Heart left ventricle (tissue), 16 donors: ENCODE measurements at regions of chr6 and their contacts with region 1.

Region 1: GRCh38 chr6:151025076-151025475 is 159.6 kb downstream of the MTHFD1L start:
- DNase-seq: no peak
- ATAC-seq: peak in 3 of 4 donors; percentile 43 to 63 (median 54)
- H3K4me3 ChIP-seq: no peak overlapping the region
- H3K27ac ChIP-seq: peak overlapping the region in 1 of 12 donors; percentile 69
- H3K4me1 ChIP-seq: peaks cover 0 to 17% (median 5%) of the 10 kb centered on the region in 12 donors
- H3K27me3 ChIP-seq: no peaks in the 10 kb centered on the region
- CTCF ChIP-seq: no peak
- POLR2A ChIP-seq: no peak

Region 2: GRCh38 chr6:150711584-150712504 is 313.2 kb before region 1 on chr6:
- intact Hi-C with region 1: no loop called
- DNase-seq: peak; percentile 47 to 64 (median 49)
- ATAC-seq: peak in 3 of 4 donors; percentile 38 to 75 (median 45)
- H3K4me3 ChIP-seq: no peak overlapping the region
- H3K27ac ChIP-seq: peak overlapping the region in 2 of 12 donors; percentile 14 to 40
- H3K4me1 ChIP-seq: peaks cover 0 to 44% (median 15%) of the 10 kb centered on the region in 12 donors
- H3K27me3 ChIP-seq: no peaks in the 10 kb centered on the region
- CTCF ChIP-seq: no peak
- POLR2A ChIP-seq: no peak

Region 3: DNA sequence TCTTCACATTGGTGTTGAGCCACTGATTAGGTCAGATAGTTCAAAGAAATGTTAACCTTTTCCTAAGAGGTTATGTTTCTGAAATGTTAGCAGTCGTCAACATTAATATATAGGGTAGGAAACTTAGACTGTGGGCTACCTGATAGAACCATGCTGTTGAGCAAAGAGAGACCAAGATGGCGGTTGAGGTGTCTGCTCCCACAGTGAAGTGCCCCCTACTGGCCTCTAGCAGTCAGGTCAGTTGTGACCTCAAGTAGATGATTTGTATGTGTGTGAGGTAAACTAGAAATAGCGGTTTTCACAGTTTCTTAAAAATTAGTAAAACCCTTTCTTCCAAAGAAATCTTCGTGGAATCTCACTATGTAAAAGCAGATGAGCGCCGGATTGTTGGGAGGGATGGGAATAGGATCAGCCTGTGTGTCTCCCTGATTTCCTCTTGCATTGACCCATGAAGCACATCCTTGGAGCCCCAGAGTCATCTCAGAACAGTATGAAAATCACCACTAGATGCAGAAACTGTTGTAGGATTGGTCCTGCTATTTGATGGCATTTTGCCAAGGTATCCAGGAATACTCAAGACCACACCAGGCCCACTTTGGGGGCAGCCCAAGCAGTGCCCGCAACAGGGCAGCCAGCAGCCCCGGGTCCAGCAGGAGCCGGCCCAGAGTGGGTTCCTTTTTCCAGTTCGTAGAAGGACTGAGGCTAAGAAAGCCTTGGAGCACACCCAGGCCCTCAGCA is 119.1 kb before region 1 on chr6:
- intact Hi-C with region 1: no loop called
- DNase-seq: no peak
- ATAC-seq: no peak
- H3K4me3 ChIP-seq: no peak overlapping the region
- H3K27ac ChIP-seq: peak overlapping the region in 5 of 12 donors; percentile 16 to 49 (median 29)
- H3K4me1 ChIP-seq: peaks cover 0 to 19% (median 6%) of the 10 kb centered on the region in 12 donors
- H3K27me3 ChIP-seq: no peaks in the 10 kb centered on the region
- CTCF ChIP-seq: peak in 3 of 12 donors; percentile 11 to 27 (median 20)
- POLR2A ChIP-seq: no peak

Region 4: GRCh38 chr6:151071295-151071694 is 46.2 kb after region 1 on chr6:
- intact Hi-C with region 1: loop called in 1 of 10 experiments (anchors 5 kb)
- DNase-seq: peak in 4 of 5 donors; percentile 41 to 66 (median 49)
- ATAC-seq: peak in 3 of 4 donors; percentile 69 to 78 (median 76)
- H3K4me3 ChIP-seq: peak overlapping the region in 8 of 12 donors; percentile 10 to 43 (median 21)
- H3K27ac ChIP-seq: peak overlapping the region in 10 of 12 donors; percentile 4 to 69 (median 56)
- H3K4me1 ChIP-seq: peaks cover 3 to 37% (median 19%) of the 10 kb centered on the region in 12 donors
- H3K27me3 ChIP-seq: no peaks in the 10 kb centered on the region
- CTCF ChIP-seq: no peak
- POLR2A ChIP-seq: no peak